B cell (primary cell): ENCODE measurements at regions of chr1 and their contacts with region 1.

Region 1: GRCh38 chr1:154335025-154335714 is 9.8 kb downstream of the ATP8B2 start:
- DNase-seq: peak; percentile 89
- ATAC-seq: peak; percentile 89
- H3K4me3 ChIP-seq: no peak overlapping the region
- H3K4me3 Mint-ChIP-seq: no peak overlapping the region
- H3K27ac ChIP-seq: no peak overlapping the region
- H3K27ac Mint-ChIP-seq: peak overlapping the region; percentile 86
- H3K4me1 ChIP-seq: peaks cover 10 to 17% of the 10 kb centered on the region in 2 donors
- H3K4me1 Mint-ChIP-seq: peaks cover 13% of the 10 kb centered on the region
- H3K27me3 ChIP-seq: no peaks in the 10 kb centered on the region
- H3K27me3 Mint-ChIP-seq: no peaks in the 10 kb centered on the region
- CTCF ChIP-seq: peak; percentile 91

Region 2: GRCh38 chr1:154198756-154199562 is 136.2 kb before region 1 on chr1:
- CTCF ChIA-PET with region 1: interaction called, 14 read pairs
- POLR2A ChIA-PET with region 1: interaction called, 4 read pairs
- intact Hi-C with region 1: loop called (anchors 1 kb)
- DNase-seq: peak; percentile 77
- ATAC-seq: peak; percentile 76
- H3K4me3 ChIP-seq: no peak overlapping the region
- H3K4me3 Mint-ChIP-seq: no peak overlapping the region
- H3K27ac ChIP-seq: peak overlapping the region in 1 of 2 donors; percentile 28
- H3K27ac Mint-ChIP-seq: no peak overlapping the region
- H3K4me1 ChIP-seq: peaks cover 5 to 10% of the 10 kb centered on the region in 2 donors
- H3K4me1 Mint-ChIP-seq: no peaks in the 10 kb centered on the region
- H3K27me3 ChIP-seq: no peaks in the 10 kb centered on the region
- H3K27me3 Mint-ChIP-seq: peaks cover 4% of the 10 kb centered on the region
- CTCF ChIP-seq: peak; percentile 73

Region 3: DNA sequence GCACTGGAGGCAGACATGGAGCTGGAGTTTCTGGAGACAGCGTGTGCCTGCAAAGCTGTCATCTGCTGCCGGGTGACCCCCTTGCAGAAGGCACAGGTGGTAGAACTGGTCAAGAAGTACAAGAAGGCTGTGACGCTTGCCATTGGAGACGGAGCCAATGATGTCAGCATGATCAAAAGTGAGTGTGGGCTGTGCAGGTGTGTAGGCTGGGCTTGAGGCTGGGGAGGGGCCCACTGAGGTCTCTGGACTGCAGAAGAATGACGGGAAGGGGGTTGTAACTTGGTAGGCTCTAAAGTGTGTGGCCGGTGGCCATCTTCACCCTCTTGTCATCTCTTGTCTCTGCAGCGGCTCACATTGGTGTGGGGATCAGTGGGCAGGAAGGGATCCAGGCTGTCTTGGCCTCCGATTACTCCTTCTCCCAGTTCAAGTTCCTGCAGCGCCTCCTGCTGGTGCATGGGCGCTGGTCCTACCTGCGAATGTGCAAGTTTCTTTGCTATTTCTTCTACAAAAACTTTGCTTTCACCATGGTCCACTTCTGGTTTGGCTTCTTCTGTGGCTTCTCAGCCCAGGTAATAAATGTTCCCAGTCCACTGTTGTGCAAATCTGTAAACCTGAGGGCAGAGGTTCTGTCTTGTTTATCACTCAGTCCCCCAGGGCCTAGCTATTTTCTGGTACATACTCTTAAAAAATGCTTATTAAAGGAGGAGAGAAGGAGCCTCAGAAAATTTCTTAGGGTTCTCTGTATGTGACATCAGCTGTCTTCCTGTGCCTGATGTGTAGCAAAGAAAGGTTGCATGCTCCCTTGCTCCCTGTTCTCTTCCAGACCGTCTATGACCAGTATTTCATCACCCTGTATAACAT is 10.0 kb after region 1 on chr1:
- CTCF ChIA-PET with region 1: interaction called, 17 read pairs
- POLR2A ChIA-PET with region 1: no interaction called
- intact Hi-C with region 1: no loop called
- DNase-seq: peak; percentile 46
- ATAC-seq: no peak
- H3K4me3 ChIP-seq: no peak overlapping the region
- H3K4me3 Mint-ChIP-seq: no peak overlapping the region
- H3K27ac ChIP-seq: no peak overlapping the region
- H3K27ac Mint-ChIP-seq: no peak overlapping the region
- H3K4me1 ChIP-seq: peaks cover 0 to 4% of the 10 kb centered on the region in 2 donors
- H3K4me1 Mint-ChIP-seq: peaks cover 6% of the 10 kb centered on the region
- H3K27me3 ChIP-seq: no peaks in the 10 kb centered on the region
- H3K27me3 Mint-ChIP-seq: no peaks in the 10 kb centered on the region
- CTCF ChIP-seq: peak; percentile 61

Region 4: DNA sequence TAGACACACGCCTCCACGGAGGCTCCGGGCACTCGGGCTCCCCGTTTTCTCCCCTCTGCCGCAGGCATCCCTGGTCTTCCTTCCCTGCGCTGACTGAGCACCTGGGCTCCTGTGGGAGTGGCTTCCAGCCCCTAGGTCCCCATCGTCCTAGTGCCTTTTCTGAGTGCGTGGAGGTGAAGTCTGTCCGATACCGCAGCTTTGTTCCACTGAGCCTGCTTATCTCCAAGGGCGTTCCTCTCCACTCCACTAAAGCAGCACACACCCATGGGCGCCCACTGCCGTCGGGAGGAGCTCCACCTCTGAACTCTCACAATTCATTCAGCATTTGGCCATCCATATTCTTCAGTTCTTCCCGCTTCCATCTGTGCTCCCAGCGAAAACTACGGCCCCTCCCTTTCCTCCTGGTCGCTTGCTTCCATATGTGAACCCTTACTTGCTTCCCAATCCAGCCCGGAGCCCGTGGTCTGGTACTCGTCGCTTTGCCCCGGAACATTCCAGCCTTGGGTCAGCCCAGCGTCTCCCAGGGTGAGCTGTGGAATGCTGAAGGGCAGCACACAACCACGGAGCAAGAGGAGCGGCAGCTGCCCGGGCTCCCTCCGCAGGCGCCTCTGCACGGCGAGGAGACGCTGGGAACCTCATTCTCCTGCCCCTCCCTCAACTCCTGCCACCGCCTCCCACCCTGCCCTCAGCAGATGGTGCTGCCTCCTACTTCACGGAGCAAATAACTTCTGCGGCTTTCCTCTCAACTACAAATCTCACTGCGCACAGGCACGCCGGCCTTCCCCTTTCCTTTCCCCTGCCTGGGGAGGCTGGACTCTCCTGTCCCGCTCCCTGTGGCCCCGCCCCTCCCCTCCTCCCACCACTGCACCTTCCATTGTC is 17.6 kb after region 1 on chr1:
- CTCF ChIA-PET with region 1: interaction called, 17 read pairs
- POLR2A ChIA-PET with region 1: no interaction called
- intact Hi-C with region 1: no loop called
- DNase-seq: peak; percentile 40
- ATAC-seq: peak; percentile 58
- H3K4me3 ChIP-seq: peak overlapping the region; percentile 8 to 54 (median 37)
- H3K4me3 Mint-ChIP-seq: peak overlapping the region; percentile 76
- H3K27ac ChIP-seq: no peak overlapping the region
- H3K27ac Mint-ChIP-seq: peak overlapping the region; percentile 38
- H3K4me1 ChIP-seq: peaks cover 18 to 20% of the 10 kb centered on the region in 2 donors
- H3K4me1 Mint-ChIP-seq: peaks cover 18% of the 10 kb centered on the region
- H3K27me3 ChIP-seq: peaks cover 0 to 33% (median 12%) of the 10 kb centered on the region in 4 experiments
- H3K27me3 Mint-ChIP-seq: peaks cover 20% of the 10 kb centered on the region
- CTCF ChIP-seq: no peak